Left lung (tissue), 14 donors: ENCODE measurements at regions of chr15 and their contacts with region 1.

Region 1: GRCh38 chr15:99100245-99101173 is 4.4 kb upstream of the SYNM start:
- DNase-seq: peak; percentile 59 to 90 (median 76)
- ATAC-seq: peak; percentile 73
- H3K4me3 ChIP-seq: peak overlapping the region in 1 of 2 donors; percentile 16
- H3K27ac ChIP-seq: no peak overlapping the region
- H3K4me1 ChIP-seq: peaks cover 6 to 13% of the 10 kb centered on the region in 2 donors
- H3K27me3 ChIP-seq: peaks cover 8 to 71% of the 10 kb centered on the region in 2 donors
- CTCF ChIP-seq: peak; percentile 63 to 64

Region 2: GRCh38 chr15:99213187-99213811 is 112.8 kb after region 1 on chr15:
- intact Hi-C with region 1: loop called in 1 of 2 experiments (anchors 2 kb)
- DNase-seq: peak in 3 of 4 donors; percentile 50 to 74 (median 61)
- ATAC-seq: peak; percentile 96
- H3K4me3 ChIP-seq: no peak overlapping the region
- H3K27ac ChIP-seq: no peak overlapping the region
- H3K4me1 ChIP-seq: no peaks in the 10 kb centered on the region
- H3K27me3 ChIP-seq: no peaks in the 10 kb centered on the region
- CTCF ChIP-seq: peak; percentile 70 to 79